MCF 10A (cell line): ENCODE measurements at regions of chr13 and their contacts with region 1.

Region 1: DNA sequence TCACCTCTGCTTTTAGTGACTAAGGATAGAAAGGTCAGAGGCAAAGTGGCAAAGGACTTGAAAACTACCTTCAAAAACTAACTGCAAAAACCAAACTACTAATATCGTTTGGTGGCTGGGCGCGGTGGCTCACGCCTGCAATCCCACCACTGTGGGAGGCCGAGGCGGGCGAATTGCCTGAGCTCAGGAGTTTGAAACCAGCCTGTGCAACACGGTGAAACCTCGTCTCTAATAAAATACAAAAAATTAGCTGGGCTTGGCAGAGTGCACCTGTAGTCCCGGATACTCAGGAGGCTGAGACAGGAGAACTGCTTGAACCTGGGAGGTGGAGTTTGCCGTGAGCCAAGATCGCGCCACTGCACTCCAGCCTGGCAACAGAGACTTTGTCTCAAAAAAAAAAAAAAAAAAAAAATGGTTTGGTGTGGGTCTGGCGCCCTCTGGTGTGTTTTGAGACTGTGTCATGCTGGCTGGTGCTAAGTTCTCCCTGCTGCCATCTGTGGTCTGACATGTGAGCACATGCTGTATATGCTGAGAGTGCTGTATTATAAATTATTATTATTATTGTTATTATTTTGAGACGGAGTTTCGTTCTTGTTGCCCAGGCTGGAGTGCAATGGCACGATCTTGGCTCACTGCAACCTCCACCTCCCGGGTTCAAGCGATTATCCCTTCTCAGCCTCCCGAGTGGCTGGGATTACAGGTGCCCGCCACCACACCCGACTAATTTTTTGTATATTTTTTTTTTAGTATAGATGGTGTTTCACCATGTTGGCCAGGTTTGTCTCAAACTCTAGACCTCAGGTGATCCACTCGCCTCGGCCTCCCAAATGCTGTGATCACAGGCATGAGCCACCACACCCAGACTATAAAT is 36.0 kb upstream of the RNF17 start:
- DNase-seq: peak; percentile 83
- H3K4me3 Mint-ChIP-seq: no peak overlapping the region
- H3K27ac Mint-ChIP-seq: no peak overlapping the region
- H3K4me1 Mint-ChIP-seq: no peaks in the 10 kb centered on the region
- H3K27me3 Mint-ChIP-seq: no peaks in the 10 kb centered on the region
- CTCF ChIP-seq: peak; percentile 81

Region 2: DNA sequence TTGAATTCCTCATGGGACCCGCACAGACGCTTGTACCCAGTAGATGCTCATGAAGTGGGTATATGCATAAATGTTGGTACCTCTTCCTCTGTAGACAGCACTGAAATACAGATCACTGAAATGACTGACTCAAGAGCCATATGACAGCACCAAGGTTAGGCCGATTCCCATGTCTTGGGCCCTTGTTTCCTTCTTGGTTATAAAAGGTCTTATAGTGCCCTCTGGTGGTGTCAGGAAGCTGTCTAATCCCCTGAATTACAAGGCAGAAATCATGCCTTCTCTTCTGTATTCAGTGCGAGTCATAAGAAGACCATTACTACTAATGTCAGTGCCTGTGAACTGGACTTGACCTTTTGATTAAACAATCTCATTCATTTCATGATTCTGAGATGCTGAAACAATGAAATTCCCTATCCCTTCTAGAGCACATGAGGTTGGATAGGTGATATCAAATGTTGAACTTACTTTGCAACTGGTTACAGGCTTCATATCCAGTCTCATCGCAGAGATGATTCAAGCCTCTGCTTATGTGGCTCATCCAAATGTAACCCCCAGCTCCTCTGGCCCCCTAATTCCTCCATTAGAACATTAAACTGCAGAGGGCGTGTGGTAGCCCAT is 507.8 kb before region 1 on chr13:
- CTCF ChIA-PET with region 1: no interaction called
- POLR2A ChIA-PET with region 1: no interaction called
- intact Hi-C with region 1: loop called (anchors 10 kb)
- DNase-seq: peak; percentile 82
- H3K4me3 Mint-ChIP-seq: no peak overlapping the region
- H3K27ac Mint-ChIP-seq: no peak overlapping the region
- H3K4me1 Mint-ChIP-seq: no peaks in the 10 kb centered on the region
- H3K27me3 Mint-ChIP-seq: no peaks in the 10 kb centered on the region
- CTCF ChIP-seq: peak; percentile 66

Region 3: DNA sequence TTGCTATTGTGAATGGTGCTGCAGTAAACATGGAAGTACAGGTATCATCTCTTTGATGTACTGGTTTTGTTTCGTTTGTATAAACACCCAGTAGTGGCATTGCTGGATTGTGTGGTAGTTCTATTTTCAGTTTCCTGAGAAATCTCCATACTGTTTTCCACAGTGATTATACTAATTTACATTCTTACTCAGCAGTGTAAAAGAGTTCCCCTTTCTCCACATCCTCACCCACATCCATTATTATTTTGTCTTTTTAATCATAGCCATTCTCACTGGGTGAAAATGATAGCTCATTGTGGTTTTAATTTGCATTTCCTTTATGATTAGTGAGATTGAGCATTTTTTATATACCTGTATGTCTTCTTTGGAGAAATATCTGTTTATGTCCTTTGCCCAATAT is 153.1 kb before region 1 on chr13:
- CTCF ChIA-PET with region 1: interaction called, 14 read pairs
- POLR2A ChIA-PET with region 1: no interaction called
- intact Hi-C with region 1: loop called (anchors 1 kb)
- DNase-seq: no peak
- H3K4me3 Mint-ChIP-seq: no peak overlapping the region
- H3K27ac Mint-ChIP-seq: no peak overlapping the region
- H3K4me1 Mint-ChIP-seq: no peaks in the 10 kb centered on the region
- H3K27me3 Mint-ChIP-seq: no peaks in the 10 kb centered on the region
- CTCF ChIP-seq: no peak

Region 4: GRCh38 chr13:24605923-24606372 is 122.0 kb before region 1 on chr13:
- CTCF ChIA-PET with region 1: interaction called, 24 read pairs
- POLR2A ChIA-PET with region 1: interaction called, 3 read pairs
- intact Hi-C with region 1: loop called (anchors 2 kb)
- DNase-seq: peak; percentile 43
- H3K4me3 Mint-ChIP-seq: no peak overlapping the region
- H3K27ac Mint-ChIP-seq: peak overlapping the region; percentile 64
- H3K4me1 Mint-ChIP-seq: no peaks in the 10 kb centered on the region
- H3K27me3 Mint-ChIP-seq: no peaks in the 10 kb centered on the region
- CTCF ChIP-seq: peak; percentile 22

Region 5: GRCh38 chr13:24671386-24672107 is 56.4 kb before region 1 on chr13:
- CTCF ChIA-PET with region 1: interaction called, 10 read pairs
- POLR2A ChIA-PET with region 1: interaction called, 3 read pairs
- intact Hi-C with region 1: loop called (anchors 2 kb)
- DNase-seq: peak; percentile 82
- H3K4me3 Mint-ChIP-seq: peak overlapping the region; percentile 65
- H3K27ac Mint-ChIP-seq: peak overlapping the region; percentile 97
- H3K4me1 Mint-ChIP-seq: peaks cover 29% of the 10 kb centered on the region
- H3K27me3 Mint-ChIP-seq: no peaks in the 10 kb centered on the region
- CTCF ChIP-seq: peak; percentile 50

Region 6: GRCh38 chr13:24683838-24684599 is 43.9 kb before region 1 on chr13:
- CTCF ChIA-PET with region 1: interaction called, 10 read pairs
- POLR2A ChIA-PET with region 1: no interaction called
- intact Hi-C with region 1: no loop called
- DNase-seq: peak; percentile 62
- H3K4me3 Mint-ChIP-seq: no peak overlapping the region
- H3K27ac Mint-ChIP-seq: no peak overlapping the region
- H3K4me1 Mint-ChIP-seq: no peaks in the 10 kb centered on the region
- H3K27me3 Mint-ChIP-seq: peaks cover 11% of the 10 kb centered on the region
- CTCF ChIP-seq: peak; percentile 93

Region 7: GRCh38 chr13:24693862-24694471 is 34.0 kb before region 1 on chr13:
- CTCF ChIA-PET with region 1: interaction called, 19 read pairs
- POLR2A ChIA-PET with region 1: no interaction called
- intact Hi-C with region 1: loop called (anchors 5 kb)
- DNase-seq: peak; percentile 82
- H3K4me3 Mint-ChIP-seq: no peak overlapping the region
- H3K27ac Mint-ChIP-seq: no peak overlapping the region
- H3K4me1 Mint-ChIP-seq: peaks cover 5% of the 10 kb centered on the region
- H3K27me3 Mint-ChIP-seq: peaks cover 9% of the 10 kb centered on the region
- CTCF ChIP-seq: peak; percentile 66